ENCODE measurements at regions of chr11 and their contacts with region 1.

Region 1: GRCh38 chr11:118997627-118998387 is at the start of gene CENATAC:
- DNase-seq: peak; percentile 96
- H3K4me3 ChIP-seq: peak within 1 kb of the TSS; percentile 88
- H3K27ac ChIP-seq: peak within 1 kb of the TSS; percentile 50
- H3K4me1 ChIP-seq: peaks cover 19% of the 10 kb centered on the region
- CTCF ChIP-seq: 0 out of 2 replicates have a peak, but pooled peaks have one; percentile 25
- total RNA-seq, gene CENATAC: 47.7 and 49.7 TPM in 2 replicates

Region 2: GRCh38 chr11:118870396-118871345 is 127.1 kb before region 1 on chr11:
- CTCF ChIA-PET with region 1: no interaction called
- POLR2A ChIA-PET with region 1: no interaction called
- intact Hi-C with region 1: no loop called
- DNase-seq: peak; percentile 90
- H3K4me3 ChIP-seq: peak overlapping the region; percentile 68
- H3K27ac ChIP-seq: peak overlapping the region; percentile 95
- H3K4me1 ChIP-seq: peaks cover 71% of the 10 kb centered on the region
- CTCF ChIP-seq: peak; percentile 38; the same call in 1 of the 2 replicates

Region 3: GRCh38 chr11:119018074-119018938 is 20.5 kb after region 1 on chr11 and contains the starts of genes RPS25 and TRAPPC4:
- CTCF ChIA-PET with region 1: interaction called, 4 read pairs
- POLR2A ChIA-PET with region 1: interaction called, 12 read pairs
- intact Hi-C with region 1: loop called (anchors 1 kb)
- DNase-seq: peak; percentile 97
- H3K4me3 ChIP-seq: peak within 1 kb of the TSS; percentile 81
- H3K27ac ChIP-seq: peak within 1 kb of the TSS; percentile 90
- H3K4me1 ChIP-seq: peaks cover 29% of the 10 kb centered on the region
- CTCF ChIP-seq: no peak
- total RNA-seq, gene RPS25: 1,395 and 1,541 TPM in 2 replicates
- total RNA-seq, gene TRAPPC4: 49.3 and 64.3 TPM in 2 replicates

Region 4: DNA sequence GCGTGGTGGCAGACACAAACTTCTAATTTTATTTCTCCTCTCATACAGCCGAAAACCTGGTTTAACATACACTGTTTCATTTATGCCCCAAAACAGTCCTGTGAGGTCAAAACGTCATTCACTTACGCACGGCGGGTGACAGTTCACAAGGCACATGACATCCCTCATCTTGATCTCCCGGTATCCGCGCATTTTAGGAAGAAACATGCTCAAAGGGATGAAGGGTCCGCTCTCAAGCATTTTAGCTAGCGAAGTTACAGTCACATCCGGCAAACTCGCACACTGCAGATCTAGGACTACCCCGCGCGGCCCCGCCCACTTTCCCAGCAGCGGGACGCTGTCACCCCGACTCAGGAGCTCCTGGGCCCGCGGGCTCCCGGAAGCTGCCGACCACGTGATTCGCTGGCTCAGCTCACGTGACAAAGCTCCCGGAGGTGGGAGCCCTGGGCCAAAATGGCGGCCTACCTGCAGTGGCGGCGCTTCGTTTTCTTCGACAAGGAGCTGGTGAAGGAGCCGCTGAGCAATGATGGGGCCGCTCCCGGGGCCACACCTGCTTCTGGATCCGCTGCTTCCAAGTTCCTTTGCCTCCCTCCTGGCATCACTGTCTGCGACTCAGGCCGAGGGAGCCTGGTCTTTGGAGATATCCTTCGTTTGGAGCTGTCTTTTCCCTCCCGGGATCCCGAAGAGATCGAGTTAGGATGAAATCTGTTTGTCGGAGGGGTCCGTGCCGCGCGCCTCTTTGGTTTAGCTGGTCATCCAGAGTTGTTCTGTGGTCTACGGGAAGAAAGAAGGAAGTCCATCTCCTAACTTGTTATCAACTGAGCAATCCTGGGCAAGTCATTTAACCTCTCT is 69.8 kb after region 1 on chr11 and contains the start of gene VPS11:
- CTCF ChIA-PET with region 1: no interaction called
- POLR2A ChIA-PET with region 1: interaction called, 10 read pairs
- intact Hi-C with region 1: no loop called
- DNase-seq: peak; percentile 98
- H3K4me3 ChIP-seq: peak within 1 kb of the TSS; percentile 83
- H3K27ac ChIP-seq: peak within 1 kb of the TSS; percentile 75
- H3K4me1 ChIP-seq: peaks cover 23% of the 10 kb centered on the region
- CTCF ChIP-seq: no peak
- total RNA-seq, gene VPS11: 32.2 and 46.1 TPM in 2 replicates

Region 5: GRCh38 chr11:119095066-119095880 is 97.5 kb after region 1 on chr11:
- CTCF ChIA-PET with region 1: no interaction called
- POLR2A ChIA-PET with region 1: no interaction called
- intact Hi-C with region 1: no loop called
- DNase-seq: peak; percentile 99
- H3K4me3 ChIP-seq: peak overlapping the region; percentile 81
- H3K27ac ChIP-seq: peak overlapping the region; percentile 79
- H3K4me1 ChIP-seq: peaks cover 67% of the 10 kb centered on the region
- CTCF ChIP-seq: 0 out of 2 replicates have a peak, but pooled peaks have one; percentile 22